Right ventricle myocardium superior (tissue), 1 donor: ENCODE measurements at regions of chr4 and their contacts with region 1.

Region 1: GRCh38 chr4:25913851-25914669 is at the start of gene SMIM20:
- DNase-seq: peak; percentile 93
- ATAC-seq: peak; percentile 98
- total RNA-seq, gene SMIM20: 40.1 TPM

Region 2: DNA sequence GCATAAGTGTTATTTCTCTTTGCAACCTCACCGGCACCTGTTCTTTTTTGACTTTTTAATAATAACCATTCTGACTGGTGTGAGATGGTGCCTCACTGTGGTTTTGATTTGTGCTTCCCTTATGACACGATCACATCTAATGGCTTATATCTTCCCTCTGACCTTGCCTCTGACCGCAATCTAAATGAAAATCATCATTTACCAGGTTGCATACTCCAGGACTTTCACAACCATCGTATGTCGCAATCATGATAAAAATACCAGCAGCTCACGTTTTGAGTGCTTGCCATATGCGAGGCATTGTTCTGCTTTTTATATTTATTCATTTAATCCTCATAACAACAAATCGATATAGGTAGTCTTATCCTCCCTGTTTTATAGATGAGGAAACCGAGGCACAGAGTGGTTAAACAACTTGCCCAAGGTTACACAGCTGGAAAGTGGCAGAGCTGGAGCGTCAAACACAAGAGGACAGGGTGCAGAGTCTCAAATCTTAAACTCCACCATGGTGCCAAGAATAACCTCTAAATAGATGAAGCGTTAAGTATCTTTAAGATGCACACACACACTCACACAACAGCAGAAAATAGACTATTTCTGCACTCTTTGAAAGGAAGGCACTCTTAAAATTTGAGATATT is 153.4 kb before region 1 on chr4:
- intact Hi-C with region 1: no loop called
- DNase-seq: no peak
- ATAC-seq: no peak

Region 3: GRCh38 chr4:25862411-25863346 is 51.4 kb before region 1 on chr4 and contains the start of gene SEL1L3:
- intact Hi-C with region 1: loop called (anchors 5 kb)
- DNase-seq: peak; percentile 53
- ATAC-seq: peak; percentile 34
- total RNA-seq, gene SEL1L3: 3.2 TPM

Region 4: DNA sequence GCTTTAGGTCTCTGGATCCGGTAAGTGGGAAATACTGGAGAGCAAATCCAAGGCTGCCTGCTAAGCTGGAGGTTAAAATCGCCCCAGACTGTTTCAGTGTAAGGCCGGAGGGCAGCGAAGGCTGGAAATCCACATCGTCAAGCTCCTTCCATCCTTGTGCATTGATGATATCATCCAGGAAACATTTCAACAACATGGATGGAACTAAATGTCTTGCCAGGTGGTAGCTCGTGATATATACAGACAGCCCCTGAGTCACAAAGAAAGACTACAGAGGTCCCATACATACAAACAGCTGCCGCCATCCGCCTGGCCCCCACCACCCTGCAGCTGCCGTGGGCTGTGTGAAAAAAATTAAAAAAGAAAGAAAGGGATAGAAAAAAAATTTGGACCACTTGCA is 257.9 kb after region 1 on chr4:
- intact Hi-C with region 1: no loop called
- DNase-seq: no peak
- ATAC-seq: no peak

Region 5: GRCh38 chr4:26509681-26510333 is 595.7 kb after region 1 on chr4:
- intact Hi-C with region 1: no loop called
- DNase-seq: no peak
- ATAC-seq: no peak